GM12878 (cell line): ENCODE measurements at regions of chr3 and their contacts with region 1.

Region 1: GRCh38 chr3:161220850-161221753 is at the start of gene NMD3:
- DNase-seq: peak; percentile 71
- ATAC-seq: peak; percentile 92
- H3K4me3 ChIP-seq: peak within 1 kb of the TSS; percentile 79
- H3K27ac ChIP-seq: peak within 1 kb of the TSS; percentile 86
- H3K4me1 ChIP-seq: no peaks in the 10 kb centered on the region
- H3K27me3 ChIP-seq: no peaks in the 10 kb centered on the region; a peak in 1 of 4 replicates
- CTCF ChIP-seq: no peak
- EP300 ChIP-seq: peak in 1 of 2 experiments; percentile 35; a peak in 1 of 4 replicates
- POLR2A ChIP-seq: peak; percentile 95
- RAD21 ChIP-seq: no peak
- polyA plus RNA-seq, gene NMD3: 54.6 to 66.8 TPM

Region 2: DNA sequence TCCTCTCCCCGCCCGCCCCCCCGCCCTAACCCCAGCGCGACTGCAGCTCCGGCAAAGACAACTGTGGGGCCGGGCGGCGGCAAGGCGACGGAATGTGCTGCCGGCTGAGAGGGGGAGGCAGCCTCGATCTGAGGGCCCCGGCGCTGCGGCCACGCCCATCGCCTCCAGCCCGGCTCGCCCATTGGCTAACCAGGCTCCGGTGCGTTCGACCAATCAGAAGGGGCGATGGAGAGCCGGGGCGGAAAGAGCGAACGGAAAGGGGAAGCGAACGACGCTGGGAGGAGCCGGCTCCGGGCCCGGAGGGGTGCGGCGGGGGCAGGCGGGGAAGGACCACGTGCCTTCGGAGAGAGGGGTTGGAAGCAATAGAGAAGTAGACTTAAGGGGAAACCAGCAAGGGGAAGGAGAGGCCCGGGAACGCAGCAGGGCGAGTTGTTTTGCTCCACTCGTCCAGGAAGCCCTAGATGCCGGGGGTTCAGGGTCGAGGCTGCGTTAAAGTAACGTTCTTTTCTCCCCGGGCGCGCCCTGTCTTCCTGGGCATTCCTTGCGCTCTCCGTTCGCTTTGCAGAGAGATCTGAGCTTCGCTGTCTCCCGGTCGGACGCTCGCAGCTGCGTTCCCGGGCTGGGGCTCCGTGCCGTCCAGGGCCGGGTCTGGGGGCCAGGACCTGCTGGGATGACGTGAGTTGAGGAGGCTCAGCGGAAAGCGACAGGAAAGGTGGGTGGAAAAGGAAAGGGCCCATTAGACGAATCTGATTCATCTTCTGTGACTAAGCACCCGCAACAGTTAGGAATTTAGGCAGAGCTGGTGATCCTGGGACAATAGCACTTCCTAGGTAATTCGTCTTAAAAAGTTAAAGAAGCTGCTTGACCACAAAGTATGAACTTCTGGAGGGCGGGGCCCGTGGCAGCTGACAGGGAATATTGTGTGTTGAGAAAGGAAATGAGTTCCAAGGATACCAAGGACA is 655.4 kb before region 1 on chr3 and contains the start of gene KPNA4:
- CTCF ChIA-PET with region 1: interaction called, 3 read pairs
- POLR2A ChIA-PET with region 1: no interaction called
- RAD21 ChIA-PET with region 1: interaction called, 3 read pairs
- SMC1A ChIA-PET with region 1: interaction called, 3 read pairs
- in situ Hi-C with region 1: loop called (anchors 10 kb)
- intact Hi-C with region 1: no loop called
- DNase-seq: peak; percentile 88
- ATAC-seq: peak; percentile 92
- H3K4me3 ChIP-seq: peak within 1 kb of the TSS; percentile 99
- H3K27ac ChIP-seq: peak within 1 kb of the TSS; percentile 83
- H3K4me1 ChIP-seq: peaks cover 7% of the 10 kb centered on the region; the same call in 1 of the 2 replicates
- H3K27me3 ChIP-seq: no peaks in the 10 kb centered on the region
- CTCF ChIP-seq: no peak
- EP300 ChIP-seq: no peak
- POLR2A ChIP-seq: peak; percentile 96
- RAD21 ChIP-seq: no peak
- polyA plus RNA-seq, gene KPNA4: 9.9 to 15.8 TPM

Region 3: GRCh38 chr3:160587105-160587504 is 634.0 kb before region 1 on chr3:
- CTCF ChIA-PET with region 1: no interaction called
- POLR2A ChIA-PET with region 1: no interaction called
- RAD21 ChIA-PET with region 1: no interaction called
- SMC1A ChIA-PET with region 1: no interaction called
- in situ Hi-C with region 1: no loop called
- intact Hi-C with region 1: no loop called
- DNase-seq: no peak
- ATAC-seq: no peak
- H3K4me3 ChIP-seq: no peak overlapping the region
- H3K27ac ChIP-seq: no peak overlapping the region
- H3K4me1 ChIP-seq: no peaks in the 10 kb centered on the region
- H3K27me3 ChIP-seq: no peaks in the 10 kb centered on the region; a peak in 1 of 4 replicates
- CTCF ChIP-seq: no peak
- EP300 ChIP-seq: no peak
- POLR2A ChIP-seq: no peak
- RAD21 ChIP-seq: no peak

Region 4: GRCh38 chr3:160676547-160677303 is 544.4 kb before region 1 on chr3 and contains the start of gene ARL14:
- CTCF ChIA-PET with region 1: interaction called, 5 read pairs
- POLR2A ChIA-PET with region 1: no interaction called
- RAD21 ChIA-PET with region 1: no interaction called
- SMC1A ChIA-PET with region 1: no interaction called
- in situ Hi-C with region 1: no loop called
- intact Hi-C with region 1: loop called (anchors 5 kb)
- DNase-seq: no peak
- ATAC-seq: peak; percentile 35
- H3K4me3 ChIP-seq: no peak within 1 kb of the TSS
- H3K27ac ChIP-seq: no peak within 1 kb of the TSS
- H3K4me1 ChIP-seq: no peaks in the 10 kb centered on the region
- H3K27me3 ChIP-seq: no peaks in the 10 kb centered on the region
- CTCF ChIP-seq: no peak
- EP300 ChIP-seq: no peak
- POLR2A ChIP-seq: no peak
- RAD21 ChIP-seq: no peak
- polyA plus RNA-seq, gene ARL14: 0.18 TPM in 1 of 2 experiments, not detected in the other

Region 5: GRCh38 chr3:161069511-161070263 is 151.4 kb before region 1 on chr3:
- CTCF ChIA-PET with region 1: no interaction called
- POLR2A ChIA-PET with region 1: no interaction called
- RAD21 ChIA-PET with region 1: no interaction called
- SMC1A ChIA-PET with region 1: no interaction called
- in situ Hi-C with region 1: no loop called
- intact Hi-C with region 1: loop called (anchors 5 kb)
- DNase-seq: peak; percentile 94
- ATAC-seq: peak; percentile 96
- H3K4me3 ChIP-seq: no peak overlapping the region
- H3K27ac ChIP-seq: peak overlapping the region; percentile 22; the same call in 1 of the 2 replicates
- H3K4me1 ChIP-seq: peaks cover 27% of the 10 kb centered on the region
- H3K27me3 ChIP-seq: no peaks in the 10 kb centered on the region
- CTCF ChIP-seq: no peak
- EP300 ChIP-seq: peak; percentile 75 to 83; a peak in 3 of 4 replicates
- POLR2A ChIP-seq: no peak
- RAD21 ChIP-seq: no peak

Region 6: GRCh38 chr3:161142486-161142885 is 78.6 kb before region 1 on chr3:
- CTCF ChIA-PET with region 1: no interaction called
- POLR2A ChIA-PET with region 1: no interaction called
- RAD21 ChIA-PET with region 1: no interaction called
- SMC1A ChIA-PET with region 1: no interaction called
- in situ Hi-C with region 1: no loop called
- intact Hi-C with region 1: no loop called
- DNase-seq: no peak
- ATAC-seq: no peak
- H3K4me3 ChIP-seq: no peak overlapping the region
- H3K27ac ChIP-seq: no peak overlapping the region
- H3K4me1 ChIP-seq: no peaks in the 10 kb centered on the region
- H3K27me3 ChIP-seq: no peaks in the 10 kb centered on the region
- CTCF ChIP-seq: no peak
- EP300 ChIP-seq: no peak
- POLR2A ChIP-seq: no peak
- RAD21 ChIP-seq: no peak

Region 7: DNA sequence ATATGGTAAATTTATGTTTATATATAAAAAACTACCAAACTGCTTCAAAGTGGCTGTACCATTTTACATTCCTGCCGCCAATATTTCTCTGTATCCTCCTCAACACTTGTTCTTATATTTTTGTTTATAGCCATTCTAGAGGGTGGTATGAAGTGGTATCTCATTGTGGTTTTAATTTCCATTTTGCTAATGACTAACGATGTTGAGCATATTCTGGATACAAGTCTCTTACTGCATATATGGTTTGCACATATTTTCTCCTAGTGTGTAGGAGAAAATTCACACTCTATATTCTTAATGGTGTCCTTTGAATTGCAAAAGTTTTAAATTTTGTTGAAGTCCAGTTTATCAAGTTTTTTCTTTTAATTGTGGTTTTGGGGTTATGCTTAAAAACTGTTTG is 15.1 kb after region 1 on chr3:
- CTCF ChIA-PET with region 1: interaction called, 6 read pairs
- POLR2A ChIA-PET with region 1: interaction called, 16 read pairs
- RAD21 ChIA-PET with region 1: interaction called, 3 read pairs
- SMC1A ChIA-PET with region 1: interaction called, 12 read pairs
- in situ Hi-C with region 1: no loop called
- intact Hi-C with region 1: no loop called
- DNase-seq: no peak
- ATAC-seq: no peak
- H3K4me3 ChIP-seq: no peak overlapping the region
- H3K27ac ChIP-seq: no peak overlapping the region
- H3K4me1 ChIP-seq: no peaks in the 10 kb centered on the region
- H3K27me3 ChIP-seq: no peaks in the 10 kb centered on the region
- CTCF ChIP-seq: no peak
- EP300 ChIP-seq: no peak
- POLR2A ChIP-seq: no peak
- RAD21 ChIP-seq: no peak